ENCODE measurements at regions of chr6 and their contacts with region 1.

Region 1: GRCh38 chr6:162538643-162539064 is 188.9 kb downstream of the PRKN start:
- DNase-seq: peak; percentile 86
- ATAC-seq: peak; percentile 86

Region 2: DNA sequence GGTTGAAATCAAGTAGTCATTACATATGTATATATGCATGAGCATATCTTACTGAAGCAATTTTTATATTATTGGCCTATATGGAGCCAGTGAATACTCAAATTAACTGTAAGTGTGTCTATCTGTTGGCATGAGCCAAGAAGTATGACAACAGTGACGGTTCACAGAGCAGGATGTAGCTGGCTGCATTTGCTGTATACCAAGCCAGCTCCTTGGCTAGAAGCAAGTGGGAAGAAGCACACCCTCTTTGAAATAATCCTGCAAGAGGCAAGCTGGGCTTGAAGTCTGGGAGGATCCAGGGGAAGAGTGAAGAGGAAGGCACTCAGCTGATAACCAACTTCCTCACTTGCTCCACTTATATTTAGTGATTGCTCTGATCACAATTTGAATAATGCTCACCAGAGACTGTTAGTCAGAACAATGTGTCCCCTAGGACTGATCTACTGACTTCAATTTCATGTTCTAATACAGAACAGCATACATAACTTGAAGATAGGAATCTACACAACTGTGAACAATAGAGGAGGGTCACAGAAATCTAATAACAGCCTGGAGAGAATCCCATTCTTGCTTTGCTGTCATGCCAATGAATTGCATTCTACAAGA is 308.4 kb before region 1 on chr6:
- intact Hi-C with region 1: loop called (anchors 10 kb)
- DNase-seq: no peak
- ATAC-seq: peak; percentile 79

Region 3: GRCh38 chr6:162294029-162294428 is 244.6 kb before region 1 on chr6:
- intact Hi-C with region 1: no loop called
- DNase-seq: no peak
- ATAC-seq: no peak

Region 4: GRCh38 chr6:162468326-162468725 is 70.3 kb before region 1 on chr6:
- intact Hi-C with region 1: loop called (anchors 5 kb)
- DNase-seq: no peak
- ATAC-seq: peak; percentile 83

Region 5: DNA sequence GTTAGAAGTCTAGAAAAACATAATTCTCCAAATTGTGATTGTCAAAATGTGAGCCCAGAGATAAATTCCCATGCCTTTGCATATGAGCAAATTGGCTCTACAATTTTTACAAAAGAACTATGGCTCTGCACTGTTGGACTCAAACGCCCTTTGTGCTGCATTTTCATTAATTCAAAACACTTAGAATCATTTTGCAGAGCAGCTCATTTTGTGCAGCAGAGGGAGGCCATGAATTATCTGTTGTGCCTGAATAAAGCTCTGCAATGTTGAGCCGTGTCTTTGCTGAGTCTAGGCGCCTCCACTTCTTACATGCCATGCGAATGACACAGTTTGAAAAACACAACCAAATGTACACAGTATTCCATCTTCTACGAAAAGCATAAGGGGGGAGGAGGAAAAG is 41.3 kb before region 1 on chr6:
- intact Hi-C with region 1: no loop called
- DNase-seq: no peak
- ATAC-seq: no peak

Region 6: GRCh38 chr6:162856885-162857284 is 318.2 kb after region 1 on chr6:
- intact Hi-C with region 1: no loop called
- DNase-seq: no peak
- ATAC-seq: peak; percentile 85